H1 (cell line): ENCODE measurements at regions of chr22 and their contacts with region 1.

Region 1: GRCh38 chr22:36194971-36195370 is 6.6 kb downstream of the APOL4 start:
- DNase-seq: peak; percentile 36 to 66
- H3K4me3 ChIP-seq: no peak overlapping the region
- H3K27ac ChIP-seq: no peak overlapping the region
- H3K4me1 ChIP-seq: peaks cover 0 to 11% (median 9%) of the 10 kb centered on the region in 4 experiments; a peak in 6 of 7 replicates
- H3K27me3 ChIP-seq: no peaks in the 10 kb centered on the region
- CTCF ChIP-seq: peak; percentile 36 to 82 (median 81)
- EP300 ChIP-seq: no peak
- POLR2A ChIP-seq: no peak
- RAD21 ChIP-seq: peak; percentile 78 to 83

Region 2: GRCh38 chr22:36104988-36105387 is 90.0 kb before region 1 on chr22:
- CTCF ChIA-PET with region 1: no interaction called
- POLR2A ChIA-PET with region 1: no interaction called
- DNase-seq: no peak
- H3K4me3 ChIP-seq: no peak overlapping the region
- H3K27ac ChIP-seq: no peak overlapping the region
- H3K4me1 ChIP-seq: peaks cover 0 to 1% (median under 1%) of the 10 kb centered on the region in 4 experiments; a peak in 2 of 7 replicates
- H3K27me3 ChIP-seq: no peaks in the 10 kb centered on the region
- CTCF ChIP-seq: no peak
- EP300 ChIP-seq: no peak
- POLR2A ChIP-seq: no peak
- RAD21 ChIP-seq: no peak

Region 3: GRCh38 chr22:36215981-36216380 is 21.0 kb after region 1 on chr22:
- CTCF ChIA-PET with region 1: interaction called, 13 read pairs
- POLR2A ChIA-PET with region 1: no interaction called
- DNase-seq: no peak
- H3K4me3 ChIP-seq: no peak overlapping the region
- H3K27ac ChIP-seq: no peak overlapping the region
- H3K4me1 ChIP-seq: peaks cover 0 to 3% (median 0%) of the 10 kb centered on the region in 4 experiments; a peak in 1 of 7 replicates
- H3K27me3 ChIP-seq: peaks cover 0 to 2% (median 0%) of the 10 kb centered on the region in 4 experiments; a peak in 3 of 7 replicates
- CTCF ChIP-seq: no peak
- EP300 ChIP-seq: no peak
- POLR2A ChIP-seq: no peak
- RAD21 ChIP-seq: no peak

Region 4: GRCh38 chr22:36244522-36245391 is 49.8 kb after region 1 on chr22:
- CTCF ChIA-PET with region 1: interaction called, 11 read pairs
- POLR2A ChIA-PET with region 1: interaction called, 3 read pairs
- DNase-seq: no peak
- H3K4me3 ChIP-seq: no peak overlapping the region
- H3K27ac ChIP-seq: no peak overlapping the region
- H3K4me1 ChIP-seq: peaks cover 0 to 2% (median 2%) of the 10 kb centered on the region in 4 experiments; a peak in 4 of 7 replicates
- H3K27me3 ChIP-seq: no peaks in the 10 kb centered on the region
- CTCF ChIP-seq: no peak
- EP300 ChIP-seq: no peak
- POLR2A ChIP-seq: no peak
- RAD21 ChIP-seq: no peak